K562 (cell line): ENCODE measurements at regions of chr3 and their contacts with region 1.

Region 1: GRCh38 chr3:186997473-186997939 is 67.2 kb downstream of the ST6GAL1 start:
- DNase-seq: no peak
- ATAC-seq: no peak; the same call in 1 of the 3 replicates
- H3K4me3 ChIP-seq: no peak overlapping the region
- H3K27ac ChIP-seq: peak overlapping the region; percentile 86
- H3K4me1 ChIP-seq: peaks cover 19 to 44% of the 10 kb centered on the region in 2 experiments
- H3K27me3 ChIP-seq: no peaks in the 10 kb centered on the region
- CTCF ChIP-seq: no peak
- EP300 ChIP-seq: no peak
- POLR2A ChIP-seq: no peak
- RAD21 ChIP-seq: no peak

Region 2: GRCh38 chr3:187041362-187042307 is 44.1 kb after region 1 on chr3:
- CTCF ChIA-PET with region 1: no interaction called
- POLR2A ChIA-PET with region 1: no interaction called
- in situ Hi-C with region 1: no loop called
- intact Hi-C with region 1: loop called (anchors 5 kb)
- DNase-seq: peak; percentile 27 to 81 (median 44)
- ATAC-seq: peak; percentile 87
- H3K4me3 ChIP-seq: no peak overlapping the region
- H3K27ac ChIP-seq: peak overlapping the region; percentile 76
- H3K4me1 ChIP-seq: peaks cover 18 to 31% of the 10 kb centered on the region in 2 experiments
- H3K27me3 ChIP-seq: no peaks in the 10 kb centered on the region
- CTCF ChIP-seq: peak in 1 of 3 experiments; percentile 4; a peak in 1 of 6 replicates
- EP300 ChIP-seq: peak; percentile 35; the same call in 1 of the 2 replicates
- POLR2A ChIP-seq: no peak
- RAD21 ChIP-seq: peak in 1 of 2 experiments; percentile 12; a peak in 2 of 4 replicates

Region 3: DNA sequence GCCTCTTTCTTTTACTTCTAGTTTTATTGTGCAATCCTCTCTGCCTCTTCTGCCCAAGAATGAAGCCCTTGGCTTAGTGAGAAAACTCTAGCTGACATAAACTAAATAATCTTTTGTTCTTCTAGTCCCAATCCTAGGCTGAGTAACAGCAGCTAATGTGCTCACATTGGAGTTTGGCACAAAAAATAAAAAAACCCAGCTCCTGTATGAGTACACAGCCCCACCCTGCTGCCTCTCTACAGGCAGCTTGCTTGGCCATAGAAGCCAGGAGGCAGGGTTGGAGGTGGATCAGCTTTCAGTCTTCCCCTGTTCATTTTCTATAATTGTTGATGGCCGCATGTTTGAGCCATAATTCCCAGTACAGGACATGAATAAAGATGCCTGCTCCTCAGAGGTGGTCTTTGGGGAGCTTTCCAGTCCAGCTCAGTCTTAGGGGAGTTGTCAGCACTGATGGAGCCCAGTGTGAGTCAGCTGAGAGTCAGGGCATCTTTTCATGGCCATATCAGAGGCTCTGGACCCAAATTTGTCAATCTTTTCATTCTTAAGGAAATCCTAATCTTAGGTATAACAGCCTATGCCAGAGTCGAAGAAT is 246.5 kb after region 1 on chr3:
- CTCF ChIA-PET with region 1: no interaction called
- POLR2A ChIA-PET with region 1: no interaction called
- in situ Hi-C with region 1: no loop called
- intact Hi-C with region 1: no loop called
- DNase-seq: no peak
- ATAC-seq: no peak
- H3K4me3 ChIP-seq: no peak overlapping the region
- H3K27ac ChIP-seq: no peak overlapping the region
- H3K4me1 ChIP-seq: no peaks in the 10 kb centered on the region
- H3K27me3 ChIP-seq: peaks cover 8 to 28% of the 10 kb centered on the region in 2 experiments; a peak in 4 of 5 replicates
- CTCF ChIP-seq: no peak
- EP300 ChIP-seq: no peak
- POLR2A ChIP-seq: no peak
- RAD21 ChIP-seq: no peak